ENCODE measurements at regions of chr3 and their contacts with region 1.

Region 1: DNA sequence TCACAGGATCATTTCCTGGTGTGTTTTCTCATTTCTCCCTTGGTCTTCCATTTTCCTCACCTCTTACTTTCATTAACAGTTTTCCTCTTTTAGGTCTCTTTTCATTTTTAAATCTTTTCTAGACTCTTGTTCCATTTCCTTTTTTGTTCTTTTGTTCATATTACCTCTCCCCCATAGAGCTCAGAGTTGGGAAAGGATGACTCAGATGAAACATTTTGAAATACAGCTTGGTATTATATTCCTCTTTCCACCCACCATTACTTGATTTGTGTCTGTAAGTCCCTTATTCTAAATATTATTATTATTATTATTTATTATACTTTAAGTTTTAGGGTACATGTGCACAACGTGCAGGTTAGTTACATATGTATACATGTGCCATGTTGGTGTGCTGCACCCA is 153.1 kb downstream of the VGLL3 start:
- DNase-seq: no peak

Region 2: DNA sequence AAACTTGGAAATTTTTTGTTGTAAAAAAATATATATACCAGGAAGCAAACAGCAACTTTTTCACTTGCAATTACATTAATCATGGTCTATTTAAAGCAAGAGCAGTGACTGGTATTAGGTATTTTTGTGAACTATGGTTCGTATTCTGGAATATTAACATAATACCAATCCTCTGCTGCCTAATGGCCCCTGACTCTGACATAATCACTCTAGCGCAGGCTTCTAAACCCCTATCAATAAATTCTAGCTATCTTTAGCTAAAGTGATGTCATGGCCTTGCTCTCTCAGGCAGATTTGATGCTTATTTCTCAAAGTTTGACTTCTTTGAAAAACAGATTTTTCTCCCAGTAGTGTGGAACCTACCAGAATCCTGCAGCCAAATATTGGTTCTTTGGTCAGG is 655.3 kb before region 1 on chr3:
- intact Hi-C with region 1: no loop called
- DNase-seq: no peak

Region 3: GRCh38 chr3:86537171-86537570 is 300.7 kb before region 1 on chr3:
- intact Hi-C with region 1: no loop called
- DNase-seq: no peak

Region 4: GRCh38 chr3:86867982-86868381 is 30.1 kb after region 1 on chr3:
- intact Hi-C with region 1: loop called in 1 of 2 experiments (anchors 2 kb)
- DNase-seq: no peak

Region 5: GRCh38 chr3:86937305-86937791 is 99.5 kb after region 1 on chr3:
- intact Hi-C with region 1: no loop called
- DNase-seq: peak; percentile 80